ENCODE measurements at regions of chr14 and their contacts with region 1.

Region 1: GRCh38 chr14:45134051-45134958 is at the start of gene FKBP3:
- DNase-seq: peak; percentile 93
- H3K4me3 Mint-ChIP-seq: peak within 1 kb of the TSS; percentile 98
- H3K27ac Mint-ChIP-seq: peak within 1 kb of the TSS; percentile 97
- H3K4me1 Mint-ChIP-seq: peaks cover 34% of the 10 kb centered on the region
- H3K27me3 Mint-ChIP-seq: no peaks in the 10 kb centered on the region
- total RNA-seq, gene FKBP3: 58.0 and 59.3 TPM in 2 replicates

Region 2: DNA sequence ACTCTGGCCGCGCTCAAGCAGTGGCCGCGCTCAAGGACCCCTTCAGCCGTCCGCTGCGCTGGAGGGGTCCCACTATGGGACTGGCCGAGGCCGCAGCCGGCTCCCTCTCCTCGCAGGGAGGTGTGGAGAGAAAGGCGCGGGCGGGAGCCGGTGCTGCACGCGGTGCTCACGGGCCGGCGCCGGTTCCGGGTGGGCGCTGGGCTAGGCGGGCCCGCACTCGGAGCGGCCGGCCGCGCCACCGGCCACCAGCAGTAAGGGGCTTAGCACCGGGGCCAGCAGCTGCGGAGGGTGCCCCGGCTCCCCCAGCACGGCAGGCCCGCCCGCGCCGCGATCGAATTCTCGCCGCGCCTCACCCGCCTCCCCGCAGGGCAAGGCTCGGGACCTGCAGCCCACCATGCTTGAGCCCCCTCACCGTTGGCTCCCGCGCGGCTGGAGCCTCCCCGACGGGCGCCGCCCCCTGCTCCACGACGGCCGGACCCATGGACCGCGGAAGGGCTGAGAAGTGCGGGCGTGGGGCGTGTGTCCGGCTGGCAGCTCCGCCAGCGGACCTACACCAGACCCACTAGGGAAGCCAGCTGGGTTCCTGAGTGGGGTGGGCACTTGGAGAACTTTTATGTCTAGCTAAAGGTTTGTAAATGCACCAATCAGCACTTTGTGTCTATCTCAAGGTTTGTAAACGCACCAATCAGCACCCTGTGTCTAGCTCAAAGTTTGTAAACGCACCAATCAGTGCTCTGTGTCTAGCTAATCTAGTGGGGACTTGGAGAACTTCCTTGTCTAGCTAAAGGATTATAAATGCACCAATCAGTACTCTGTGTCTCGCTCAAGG is 222.1 kb before region 1 on chr14:
- intact Hi-C with region 1: loop called (anchors 1 kb)
- DNase-seq: no peak
- H3K4me3 Mint-ChIP-seq: peak overlapping the region; percentile 45
- H3K27ac Mint-ChIP-seq: no peak overlapping the region
- H3K4me1 Mint-ChIP-seq: peaks cover 10% of the 10 kb centered on the region
- H3K27me3 Mint-ChIP-seq: peaks cover 29% of the 10 kb centered on the region

Region 3: DNA sequence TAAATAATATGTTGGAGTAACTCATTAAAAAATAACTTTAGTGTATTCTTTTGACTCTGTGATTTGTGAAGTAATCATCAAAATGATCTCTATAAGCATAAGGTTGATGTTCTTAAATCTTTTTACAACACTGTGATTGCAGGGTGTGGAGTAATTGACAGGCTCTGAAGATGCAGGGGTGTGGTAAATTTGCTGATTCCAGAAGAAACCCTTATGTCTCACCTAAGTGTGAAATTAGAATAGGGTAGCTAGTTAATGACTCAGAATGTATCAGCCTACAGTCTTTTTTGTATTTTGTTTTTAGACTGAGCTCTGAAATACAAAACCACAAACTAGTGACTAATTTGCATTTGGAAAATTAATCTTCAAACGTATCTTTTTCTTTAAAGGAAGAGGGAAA is 44.5 kb before region 1 on chr14:
- intact Hi-C with region 1: loop called (anchors 1 kb)
- DNase-seq: no peak
- H3K4me3 Mint-ChIP-seq: peak overlapping the region; percentile 6
- H3K27ac Mint-ChIP-seq: peak overlapping the region; percentile 38
- H3K4me1 Mint-ChIP-seq: peaks cover 71% of the 10 kb centered on the region
- H3K27me3 Mint-ChIP-seq: no peaks in the 10 kb centered on the region

Region 4: GRCh38 chr14:45201905-45202304 is 67.6 kb after region 1 on chr14:
- intact Hi-C with region 1: loop called (anchors 5 kb)
- DNase-seq: peak; percentile 9
- H3K4me3 Mint-ChIP-seq: no peak overlapping the region
- H3K27ac Mint-ChIP-seq: no peak overlapping the region
- H3K4me1 Mint-ChIP-seq: peaks cover 11% of the 10 kb centered on the region
- H3K27me3 Mint-ChIP-seq: no peaks in the 10 kb centered on the region

Region 5: GRCh38 chr14:45267071-45267470 is 132.8 kb after region 1 on chr14:
- intact Hi-C with region 1: loop called (anchors 1 kb)
- DNase-seq: no peak
- H3K4me3 Mint-ChIP-seq: no peak overlapping the region
- H3K27ac Mint-ChIP-seq: no peak overlapping the region
- H3K4me1 Mint-ChIP-seq: peaks cover 5% of the 10 kb centered on the region
- H3K27me3 Mint-ChIP-seq: peaks cover 7% of the 10 kb centered on the region